Spleen (tissue), 13 donors: ENCODE measurements at regions of chr19 and their contacts with region 1.

Region 1: GRCh38 chr19:49097455-49098288 is 12.4 kb downstream of the SNRNP70 start:
- DNase-seq: peak; percentile 90
- H3K4me3 ChIP-seq: no peak overlapping the region
- H3K27ac ChIP-seq: no peak overlapping the region
- H3K4me1 ChIP-seq: peaks cover 0 to 40% (median 16%) of the 10 kb centered on the region in 6 donors
- H3K27me3 ChIP-seq: no peaks in the 10 kb centered on the region
- CTCF ChIP-seq: peak; percentile 93 to 99 (median 98)
- POLR2A ChIP-seq: no peak

Region 2: GRCh38 chr19:49148784-49149651 is 51.3 kb after region 1 on chr19:
- intact Hi-C with region 1: loop called (anchors 10 kb)
- DNase-seq: peak; percentile 90
- H3K4me3 ChIP-seq: peak overlapping the region; percentile 44 to 75 (median 60)
- H3K27ac ChIP-seq: peak overlapping the region in 7 of 8 donors; percentile 60 to 76 (median 70)
- H3K4me1 ChIP-seq: peaks cover 16 to 57% (median 50%) of the 10 kb centered on the region in 6 donors
- H3K27me3 ChIP-seq: peaks cover 0 to 94% (median 34%) of the 10 kb centered on the region in 7 donors
- CTCF ChIP-seq: no peak
- POLR2A ChIP-seq: no peak

Region 3: DNA sequence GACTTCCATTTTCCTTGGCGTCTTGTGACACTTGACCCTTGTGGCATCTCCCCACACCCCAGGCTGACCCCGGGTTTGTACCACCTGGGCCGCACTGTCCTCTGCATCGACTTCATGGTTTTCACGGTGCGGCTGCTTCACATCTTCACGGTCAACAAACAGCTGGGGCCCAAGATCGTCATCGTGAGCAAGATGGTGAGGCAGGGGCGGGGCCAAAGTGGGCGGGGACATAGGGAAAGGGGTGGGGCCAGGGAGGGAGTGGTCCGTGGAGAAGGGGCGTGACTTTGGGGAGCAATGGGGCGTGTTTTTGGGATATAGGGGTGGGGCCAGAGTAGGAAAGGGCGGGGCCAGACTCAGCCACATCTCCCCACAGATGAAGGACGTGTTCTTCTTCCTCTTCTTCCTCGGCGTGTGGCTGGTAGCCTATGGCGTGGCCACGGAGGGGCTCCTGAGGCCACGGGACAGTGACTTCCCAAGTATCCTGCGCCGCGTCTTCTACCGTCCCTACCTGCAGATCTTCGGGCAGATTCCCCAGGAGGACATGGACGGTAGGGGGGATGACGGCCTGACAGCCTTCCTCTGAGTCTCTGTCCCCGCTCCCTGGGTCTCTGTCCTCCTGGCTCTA is 102.7 kb after region 1 on chr19:
- intact Hi-C with region 1: loop called (anchors 2 kb)
- DNase-seq: no peak
- H3K4me3 ChIP-seq: no peak overlapping the region
- H3K27ac ChIP-seq: no peak overlapping the region
- H3K4me1 ChIP-seq: peaks cover 0 to 7% (median 0%) of the 10 kb centered on the region in 6 donors
- H3K27me3 ChIP-seq: no peaks in the 10 kb centered on the region
- CTCF ChIP-seq: no peak
- POLR2A ChIP-seq: no peak